ENCODE measurements at regions of chr6 and their contacts with region 1.

Region 1: DNA sequence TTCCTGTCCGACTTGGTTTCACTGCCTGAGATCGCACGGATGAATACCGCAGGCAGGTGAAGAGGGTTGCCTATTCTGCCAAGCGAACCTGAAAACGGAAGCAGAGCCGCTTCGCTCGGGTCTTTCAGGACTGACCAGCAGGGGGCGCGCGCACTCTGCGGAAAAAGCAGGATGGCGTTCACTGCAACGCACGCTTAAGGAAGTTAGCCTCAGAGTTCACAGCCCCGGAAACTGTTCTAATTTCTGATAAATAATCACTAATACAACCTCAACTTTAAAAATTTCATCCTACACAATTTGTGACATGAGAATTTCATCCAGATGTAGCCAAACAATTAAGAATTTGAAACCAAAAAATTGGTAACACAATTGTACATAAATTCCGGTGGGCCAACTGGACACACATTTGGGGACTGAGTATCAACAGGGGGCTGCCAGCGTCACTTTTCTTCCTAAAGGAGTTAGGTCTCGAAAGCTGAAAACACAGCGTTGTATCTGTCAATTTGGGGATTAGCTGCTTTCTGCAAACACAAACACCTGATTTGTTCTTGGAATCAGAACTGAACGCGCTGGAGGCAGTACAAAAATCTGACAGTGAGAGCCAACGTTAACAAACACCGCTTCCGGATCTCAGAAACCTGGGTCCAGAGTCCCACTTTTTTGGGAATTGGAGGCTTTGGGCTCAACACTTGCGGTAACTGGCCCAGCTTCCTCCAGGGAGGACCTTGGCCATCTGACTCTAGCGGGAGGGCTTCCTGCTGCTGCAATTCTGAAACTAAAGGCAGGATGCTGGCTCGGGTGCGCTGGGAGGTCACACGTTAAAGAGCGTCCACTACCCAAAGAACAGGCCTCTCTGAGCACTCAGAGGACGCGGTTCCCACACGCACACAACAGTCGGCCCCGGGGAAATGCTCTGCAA is 8.8 kb downstream of the PXDC1 start:
- DNase-seq: peak; percentile 78
- ATAC-seq: peak; percentile 85
- H3K4me3 ChIP-seq: peak overlapping the region; percentile 39 to 60 (median 51)
- H3K27ac ChIP-seq: peak overlapping the region; percentile 57
- H3K4me1 ChIP-seq: peaks cover 70% of the 10 kb centered on the region
- H3K27me3 ChIP-seq: no peaks in the 10 kb centered on the region
- CTCF ChIP-seq: peak; percentile 98
- EP300 ChIP-seq: 0 out of 4 replicates have a peak, but pooled peaks of 1 of the 2 experiments have one; percentile 32
- POLR2A ChIP-seq: no peak
- RAD21 ChIP-seq: peak; percentile 97

Region 2: DNA sequence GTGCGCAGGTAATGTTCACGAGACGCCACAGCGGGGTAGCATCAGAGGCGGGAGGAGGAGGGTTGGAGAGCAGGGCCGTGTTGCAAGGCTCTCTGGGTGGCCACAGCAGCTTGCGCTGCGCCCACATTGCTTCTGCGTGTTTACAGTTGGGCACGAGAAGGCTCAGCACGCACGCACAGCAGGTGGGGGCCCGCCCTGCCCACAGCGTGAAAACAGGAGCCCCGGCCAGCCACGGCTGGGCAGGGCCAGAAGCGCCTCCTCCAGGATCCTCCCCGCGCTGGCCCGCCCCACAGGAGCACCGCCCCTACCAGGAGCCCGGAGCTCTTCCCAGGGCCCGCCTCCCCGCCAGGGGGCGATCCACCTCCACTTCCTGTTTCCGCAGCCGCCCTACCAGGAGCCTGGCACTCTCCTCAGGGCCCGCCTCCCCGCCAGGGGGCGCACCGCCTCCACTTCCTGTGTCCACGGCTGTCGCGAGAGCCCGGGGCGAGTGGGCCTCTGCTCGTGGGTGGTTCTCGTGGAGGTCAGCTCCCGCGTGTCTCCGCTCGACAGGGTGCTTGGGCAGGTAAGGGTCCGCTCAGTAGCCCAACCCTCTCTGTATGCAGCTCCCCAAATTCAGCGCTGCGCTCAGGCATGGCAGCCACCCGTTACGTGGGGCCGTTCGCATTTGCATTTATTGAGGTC is 106.4 kb after region 1 on chr6 and contains the start of gene FAM50B:
- CTCF ChIA-PET with region 1: interaction called, 11 read pairs
- POLR2A ChIA-PET with region 1: no interaction called
- in situ Hi-C with region 1: no loop called
- intact Hi-C with region 1: no loop called
- DNase-seq: no peak
- ATAC-seq: peak; percentile 87
- H3K4me3 ChIP-seq: no peak within 1 kb of the TSS
- H3K27ac ChIP-seq: no peak within 1 kb of the TSS
- H3K4me1 ChIP-seq: peaks cover 40% of the 10 kb centered on the region
- H3K27me3 ChIP-seq: no peaks in the 10 kb centered on the region
- CTCF ChIP-seq: peak; percentile 74
- EP300 ChIP-seq: no peak
- POLR2A ChIP-seq: no peak
- RAD21 ChIP-seq: peak; percentile 96
- total RNA-seq, gene FAM50B: not detected in 2 replicates

Region 3: DNA sequence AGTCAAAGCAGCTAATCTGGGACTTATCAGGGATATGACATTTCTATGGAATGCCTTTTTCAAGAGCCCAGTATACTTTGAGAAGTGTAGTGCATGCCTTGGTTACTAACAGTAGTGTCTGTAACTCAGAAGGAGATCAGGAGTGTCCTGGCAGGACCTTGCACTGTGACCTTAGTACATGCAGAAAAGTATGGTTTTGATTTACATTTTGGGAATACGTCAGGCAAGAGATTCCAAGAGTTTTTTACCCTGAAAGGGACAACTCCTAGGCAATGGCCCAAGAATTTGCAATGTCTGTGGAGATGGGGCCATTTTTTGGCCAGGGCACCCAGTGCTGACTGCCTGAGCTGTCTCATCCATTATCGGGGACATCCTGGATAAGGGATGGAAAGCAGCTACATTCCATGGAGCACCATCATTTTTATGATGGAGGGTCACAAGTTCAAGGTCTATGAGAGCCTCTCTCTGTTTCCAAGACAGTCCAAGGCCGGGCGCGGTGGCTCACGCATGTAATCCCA is 186.7 kb after region 1 on chr6:
- CTCF ChIA-PET with region 1: interaction called, 26 read pairs
- POLR2A ChIA-PET with region 1: interaction called, 3 read pairs
- in situ Hi-C with region 1: loop called (anchors 5 kb)
- intact Hi-C with region 1: loop called (anchors 1 kb)
- DNase-seq: no peak
- ATAC-seq: no peak
- H3K4me3 ChIP-seq: no peak overlapping the region
- H3K27ac ChIP-seq: no peak overlapping the region
- H3K4me1 ChIP-seq: peaks cover 16% of the 10 kb centered on the region
- H3K27me3 ChIP-seq: no peaks in the 10 kb centered on the region
- CTCF ChIP-seq: no peak
- EP300 ChIP-seq: no peak
- POLR2A ChIP-seq: no peak
- RAD21 ChIP-seq: no peak

Region 4: DNA sequence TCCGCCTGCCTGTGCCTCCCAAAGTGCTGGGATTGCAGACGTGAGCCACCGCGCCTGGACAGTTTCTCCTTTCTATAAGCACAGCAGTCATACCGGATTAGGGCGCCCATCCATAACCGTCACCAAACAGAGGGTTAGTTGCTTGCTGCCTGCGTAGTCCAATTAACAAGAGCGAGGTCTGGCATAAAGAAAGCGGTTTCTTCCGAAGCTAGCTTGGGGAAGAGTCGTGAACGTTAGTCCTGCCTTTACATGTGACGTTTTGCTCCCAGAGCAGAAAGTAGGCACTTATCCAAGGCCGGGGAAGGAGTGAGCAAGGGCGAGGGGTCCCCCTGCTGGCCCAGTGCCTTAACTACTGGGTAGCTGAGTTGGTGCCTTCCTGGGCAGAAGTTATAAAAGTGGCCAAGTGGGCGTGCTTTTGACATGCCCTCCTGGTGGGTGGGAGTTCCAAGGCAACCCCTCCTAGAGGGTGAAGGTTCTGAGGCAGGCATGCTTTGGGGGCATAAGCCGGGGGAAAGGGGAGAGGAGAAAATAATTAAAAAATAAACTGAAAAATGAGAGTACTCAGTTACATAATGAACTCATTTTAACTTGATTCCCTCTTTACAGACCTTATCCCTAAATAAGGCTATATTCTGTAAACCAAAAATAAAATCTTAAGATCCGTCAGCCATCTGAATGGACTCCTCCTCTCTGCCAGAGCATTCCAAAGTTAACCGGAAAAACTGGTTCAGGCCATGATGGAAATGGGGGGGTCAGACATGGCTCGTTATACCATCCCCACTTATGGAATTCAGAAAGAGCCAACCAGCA is 248.2 kb after region 1 on chr6:
- CTCF ChIA-PET with region 1: interaction called, 45 read pairs
- POLR2A ChIA-PET with region 1: interaction called, 3 read pairs
- in situ Hi-C with region 1: loop called (anchors 5 kb)
- intact Hi-C with region 1: loop called (anchors 1 kb)
- DNase-seq: peak; percentile 77
- ATAC-seq: peak; percentile 98
- H3K4me3 ChIP-seq: peak overlapping the region in 1 of 3 experiments; percentile 52; a peak in 2 of 6 replicates
- H3K27ac ChIP-seq: no peak overlapping the region
- H3K4me1 ChIP-seq: peaks cover 20% of the 10 kb centered on the region
- H3K27me3 ChIP-seq: no peaks in the 10 kb centered on the region
- CTCF ChIP-seq: peak; percentile 99
- EP300 ChIP-seq: no peak
- POLR2A ChIP-seq: no peak
- RAD21 ChIP-seq: peak; percentile 96

Region 5: DNA sequence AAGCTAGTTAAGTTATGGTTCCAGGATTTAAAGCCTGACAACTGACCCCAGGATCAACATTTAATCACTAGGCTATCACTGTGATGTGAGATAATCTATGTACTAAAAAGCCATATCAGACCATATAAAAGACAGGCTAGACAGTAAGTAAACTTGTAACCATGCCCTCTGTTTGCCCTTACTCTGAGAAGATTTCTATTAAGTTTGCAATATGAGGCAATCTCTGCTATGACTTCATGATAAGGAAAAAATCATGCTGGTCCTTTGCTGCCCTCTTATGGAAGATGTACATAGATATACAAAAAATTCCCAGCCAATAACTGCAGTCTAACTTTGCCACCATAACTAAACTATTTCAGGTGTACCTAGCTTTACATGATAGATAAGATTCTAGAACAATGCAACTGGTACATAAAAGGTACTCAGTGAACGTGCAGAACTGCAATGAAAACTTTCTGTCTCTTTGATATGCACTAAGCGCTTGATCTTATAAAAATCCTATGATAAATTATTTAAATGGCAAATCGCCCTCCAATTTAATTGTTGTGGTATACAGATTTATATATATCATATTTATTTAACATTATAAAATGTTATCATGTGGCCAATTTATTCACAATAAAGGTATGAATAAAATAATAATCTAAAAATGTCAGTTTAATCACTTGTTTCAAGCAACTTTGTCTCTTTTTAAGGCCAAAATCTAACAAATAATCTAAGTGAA is 265.8 kb after region 1 on chr6:
- CTCF ChIA-PET with region 1: interaction called, 13 read pairs
- POLR2A ChIA-PET with region 1: no interaction called
- in situ Hi-C with region 1: no loop called
- intact Hi-C with region 1: loop called (anchors 2 kb)
- DNase-seq: peak; percentile 86
- ATAC-seq: peak; percentile 70
- H3K4me3 ChIP-seq: no peak overlapping the region
- H3K27ac ChIP-seq: peak overlapping the region; percentile 15
- H3K4me1 ChIP-seq: peaks cover 31% of the 10 kb centered on the region
- H3K27me3 ChIP-seq: no peaks in the 10 kb centered on the region; a peak in 1 of 5 replicates
- CTCF ChIP-seq: peak; percentile 76
- EP300 ChIP-seq: 0 out of 4 replicates have a peak, but pooled peaks of 1 of the 2 experiments have one; percentile 15
- POLR2A ChIP-seq: no peak
- RAD21 ChIP-seq: peak; percentile 70

Measured in HepG2 (cell line).